CD4-positive, alpha-beta T cell (primary cell): ENCODE measurements at regions of chr22 and their contacts with region 1.

Region 1: GRCh38 chr22:50030297-50031188 is 18.0 kb upstream of the IL17REL start:
- DNase-seq: peak; percentile 69 to 93 (median 78)
- ATAC-seq: peak; percentile 95
- H3K4me3 ChIP-seq: no peak overlapping the region
- H3K4me3 Mint-ChIP-seq: no peak overlapping the region
- H3K27ac ChIP-seq: no peak overlapping the region
- H3K27ac Mint-ChIP-seq: no peak overlapping the region
- H3K4me1 ChIP-seq: peaks cover 23% of the 10 kb centered on the region
- H3K4me1 Mint-ChIP-seq: peaks cover 7% of the 10 kb centered on the region
- H3K27me3 ChIP-seq: peaks cover 9 to 22% of the 10 kb centered on the region in 2 experiments
- H3K27me3 Mint-ChIP-seq: peaks cover 14% of the 10 kb centered on the region
- CTCF ChIP-seq: peak; percentile 86

Region 2: GRCh38 chr22:49925525-49926128 is 104.9 kb before region 1 on chr22:
- CTCF ChIA-PET with region 1: interaction called, 36 read pairs
- POLR2A ChIA-PET with region 1: interaction called, 14 read pairs
- intact Hi-C with region 1: loop called in 1 of 2 experiments (anchors 1 kb)
- DNase-seq: peak; percentile 60 to 96 (median 70)
- ATAC-seq: peak; percentile 87
- H3K4me3 ChIP-seq: peak overlapping the region; percentile 45
- H3K4me3 Mint-ChIP-seq: peak overlapping the region; percentile 82
- H3K27ac ChIP-seq: peak overlapping the region; percentile 84 to 90
- H3K27ac Mint-ChIP-seq: peak overlapping the region; percentile 93
- H3K4me1 ChIP-seq: peaks cover 42% of the 10 kb centered on the region
- H3K4me1 Mint-ChIP-seq: peaks cover 32% of the 10 kb centered on the region
- H3K27me3 ChIP-seq: no peaks in the 10 kb centered on the region
- H3K27me3 Mint-ChIP-seq: no peaks in the 10 kb centered on the region
- CTCF ChIP-seq: no peak

Region 3: DNA sequence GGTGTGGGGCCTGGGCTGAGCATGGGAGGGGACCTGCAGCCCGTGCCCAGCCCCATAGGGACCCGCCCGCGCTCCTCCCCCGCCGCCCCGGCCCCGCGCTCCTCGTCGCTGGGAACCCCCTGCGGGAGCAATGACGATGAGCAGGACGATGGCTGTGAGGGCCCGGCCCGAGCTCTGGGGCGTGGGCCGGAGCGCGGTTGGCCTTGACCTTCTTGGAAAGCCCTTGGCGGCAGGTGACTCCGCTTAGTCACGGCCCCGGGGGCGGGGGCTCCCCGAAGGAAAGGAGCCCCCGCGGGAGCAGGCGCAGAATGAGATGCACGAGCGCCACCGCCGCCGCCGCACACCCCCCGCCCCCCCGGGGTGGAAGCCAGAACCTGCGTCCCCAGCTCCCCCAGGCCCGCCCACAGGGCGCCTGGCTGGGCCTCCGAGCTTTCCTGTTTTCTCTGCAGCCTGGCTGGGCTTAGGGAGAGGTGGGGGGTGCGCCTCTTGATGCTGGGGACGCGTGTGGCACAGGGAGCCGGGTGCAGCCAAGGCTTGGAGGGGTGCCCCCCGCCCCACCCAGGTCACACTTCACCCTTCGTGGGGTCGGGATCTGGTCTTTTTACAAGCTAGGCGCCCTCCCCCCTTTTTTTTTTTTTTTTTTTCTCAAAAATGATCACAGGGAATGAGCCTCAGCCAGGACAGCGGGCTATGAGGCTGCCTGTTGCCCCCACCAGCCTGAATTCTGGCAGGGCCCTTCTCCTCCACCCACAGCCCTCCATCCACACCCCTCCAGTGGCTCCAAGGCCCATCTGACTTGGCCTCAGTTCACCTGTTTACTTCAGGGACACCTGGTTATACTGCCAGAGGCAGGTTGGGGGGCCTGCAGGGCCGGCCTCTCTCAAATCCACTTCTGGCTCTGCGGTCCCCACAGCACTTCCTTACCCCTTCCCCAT is 94.3 kb before region 1 on chr22:
- CTCF ChIA-PET with region 1: interaction called, 36 read pairs
- POLR2A ChIA-PET with region 1: interaction called, 14 read pairs
- intact Hi-C with region 1: loop called in 1 of 2 experiments (anchors 1 kb)
- DNase-seq: peak; percentile 85 to 97 (median 92)
- ATAC-seq: peak; percentile 74
- H3K4me3 ChIP-seq: peak overlapping the region; percentile 47
- H3K4me3 Mint-ChIP-seq: peak overlapping the region; percentile 76
- H3K27ac ChIP-seq: peak overlapping the region; percentile 86 to 88
- H3K27ac Mint-ChIP-seq: peak overlapping the region; percentile 87
- H3K4me1 ChIP-seq: peaks cover 58% of the 10 kb centered on the region
- H3K4me1 Mint-ChIP-seq: peaks cover 13% of the 10 kb centered on the region
- H3K27me3 ChIP-seq: no peaks in the 10 kb centered on the region
- H3K27me3 Mint-ChIP-seq: no peaks in the 10 kb centered on the region
- CTCF ChIP-seq: no peak

Region 4: DNA sequence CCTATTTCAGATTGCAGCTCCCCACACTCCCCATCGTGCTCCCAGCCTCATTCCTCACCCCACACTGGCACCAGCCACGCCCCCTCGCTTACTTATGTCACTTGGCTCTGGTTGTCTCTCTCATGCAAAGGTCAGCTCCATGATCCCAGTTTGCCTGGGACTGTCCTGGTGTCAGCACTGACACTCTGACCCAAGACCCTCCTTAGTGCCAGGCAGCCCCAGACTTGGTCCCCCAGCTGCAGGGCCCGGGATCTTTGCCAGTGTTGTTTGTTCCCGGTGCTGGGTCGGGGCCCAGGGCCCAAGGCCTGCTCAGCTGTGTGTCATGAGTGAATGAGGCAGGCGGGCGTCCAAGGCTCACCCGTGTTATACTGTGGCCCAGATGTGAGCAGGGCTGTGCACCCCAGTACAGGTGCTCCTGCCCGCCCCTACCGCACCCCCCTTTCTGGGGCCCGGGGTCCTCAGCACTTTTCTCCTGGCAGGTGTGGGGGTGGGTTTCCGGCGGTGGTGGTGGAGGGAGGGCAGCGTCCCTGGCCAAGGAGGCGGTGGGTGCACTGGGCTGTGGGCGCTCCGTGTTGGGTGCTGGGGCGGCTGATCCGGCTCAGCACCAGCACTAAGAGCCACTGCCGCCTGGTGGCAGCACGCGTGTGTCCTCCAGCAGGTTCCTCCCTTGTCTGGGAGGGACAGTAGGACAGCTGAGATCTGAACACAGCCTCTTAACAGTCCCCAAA is 37.5 kb before region 1 on chr22:
- CTCF ChIA-PET with region 1: interaction called, 17 read pairs
- POLR2A ChIA-PET with region 1: no interaction called
- intact Hi-C with region 1: loop called (anchors 5 to 10 kb)
- DNase-seq: peak; percentile 51 to 87 (median 67)
- ATAC-seq: peak; percentile 95
- H3K4me3 ChIP-seq: no peak overlapping the region
- H3K4me3 Mint-ChIP-seq: no peak overlapping the region
- H3K27ac ChIP-seq: no peak overlapping the region
- H3K27ac Mint-ChIP-seq: no peak overlapping the region
- H3K4me1 ChIP-seq: peaks cover 14% of the 10 kb centered on the region
- H3K4me1 Mint-ChIP-seq: peaks cover 6% of the 10 kb centered on the region
- H3K27me3 ChIP-seq: no peaks in the 10 kb centered on the region
- H3K27me3 Mint-ChIP-seq: peaks cover 4% of the 10 kb centered on the region
- CTCF ChIP-seq: peak; percentile 75